Activated naive CD8-positive, alpha-beta T cell treated with anti-CD3 and anti-CD28 coated beads, Interleukin-2, amount 10 ng/mL, durations not matched to agents 7 days and 5 days (primary cell): ENCODE measurements at regions of chr17 and their contacts with region 1.

Region 1: GRCh38 chr17:59331129-59331928 is at the start of gene YPEL2:
- DNase-seq: peak; percentile 89
- ATAC-seq: peak; percentile 92
- H3K4me3 Mint-ChIP-seq: peak within 1 kb of the TSS; percentile 95
- H3K27ac Mint-ChIP-seq: peak within 1 kb of the TSS; percentile 92
- H3K4me1 Mint-ChIP-seq: peaks cover 45% of the 10 kb centered on the region
- H3K27me3 Mint-ChIP-seq: no peaks in the 10 kb centered on the region
- total RNA-seq, gene YPEL2: 24.0 to 25.3 TPM

Region 2: GRCh38 chr17:59361916-59362810 is 30.8 kb after region 1 on chr17:
- POLR2A ChIA-PET with region 1: interaction called, 36 read pairs
- DNase-seq: no peak
- ATAC-seq: peak; percentile 53
- H3K4me3 Mint-ChIP-seq: peak overlapping the region; percentile 52
- H3K27ac Mint-ChIP-seq: peak overlapping the region; percentile 82
- H3K4me1 Mint-ChIP-seq: peaks cover 75% of the 10 kb centered on the region
- H3K27me3 Mint-ChIP-seq: no peaks in the 10 kb centered on the region

Region 3: GRCh38 chr17:59415397-59415796 is 84.1 kb after region 1 on chr17:
- POLR2A ChIA-PET with region 1: interaction called, 11 read pairs
- DNase-seq: no peak
- ATAC-seq: no peak
- H3K4me3 Mint-ChIP-seq: peak overlapping the region; percentile 69
- H3K27ac Mint-ChIP-seq: peak overlapping the region; percentile 92
- H3K4me1 Mint-ChIP-seq: peaks cover 62% of the 10 kb centered on the region
- H3K27me3 Mint-ChIP-seq: no peaks in the 10 kb centered on the region

Region 4: DNA sequence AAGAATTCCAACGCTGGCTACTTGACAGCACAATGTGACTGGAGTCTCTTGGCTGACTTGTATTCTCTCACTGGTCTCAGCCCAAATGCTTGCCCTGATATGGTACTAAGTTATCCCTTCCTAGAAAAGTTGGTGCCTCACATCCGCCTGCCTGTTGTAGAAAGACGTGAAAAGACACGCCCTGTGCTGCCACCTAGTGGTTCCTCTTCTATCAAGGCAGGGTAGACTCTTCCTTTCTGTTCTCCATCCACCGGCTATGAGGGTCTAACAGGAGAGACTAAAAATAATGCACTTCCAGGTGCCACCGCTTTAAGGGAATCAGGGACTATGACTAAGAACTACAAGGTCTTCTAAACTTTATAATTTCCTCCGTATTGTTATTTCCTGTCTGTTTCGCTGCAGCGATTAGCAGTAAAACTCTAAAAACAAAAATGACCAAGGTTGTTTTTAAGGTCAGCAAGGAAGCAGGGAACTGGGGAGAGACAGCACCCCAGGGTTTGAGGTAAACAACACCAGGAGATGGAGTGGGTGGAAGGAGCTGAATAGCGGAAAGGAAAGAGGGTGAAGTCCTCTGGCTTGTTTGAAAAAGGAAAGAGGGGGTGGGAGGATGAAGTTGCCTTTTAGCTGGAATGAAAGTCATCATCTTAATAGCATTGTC is 109.6 kb after region 1 on chr17:
- POLR2A ChIA-PET with region 1: interaction called, 36 read pairs
- DNase-seq: peak; percentile 73
- ATAC-seq: peak; percentile 99
- H3K4me3 Mint-ChIP-seq: peak overlapping the region; percentile 66
- H3K27ac Mint-ChIP-seq: peak overlapping the region; percentile 84
- H3K4me1 Mint-ChIP-seq: peaks cover 36% of the 10 kb centered on the region
- H3K27me3 Mint-ChIP-seq: peaks cover 2% of the 10 kb centered on the region